ENCODE measurements at regions of chrX and their contacts with region 1.

Region 1: DNA sequence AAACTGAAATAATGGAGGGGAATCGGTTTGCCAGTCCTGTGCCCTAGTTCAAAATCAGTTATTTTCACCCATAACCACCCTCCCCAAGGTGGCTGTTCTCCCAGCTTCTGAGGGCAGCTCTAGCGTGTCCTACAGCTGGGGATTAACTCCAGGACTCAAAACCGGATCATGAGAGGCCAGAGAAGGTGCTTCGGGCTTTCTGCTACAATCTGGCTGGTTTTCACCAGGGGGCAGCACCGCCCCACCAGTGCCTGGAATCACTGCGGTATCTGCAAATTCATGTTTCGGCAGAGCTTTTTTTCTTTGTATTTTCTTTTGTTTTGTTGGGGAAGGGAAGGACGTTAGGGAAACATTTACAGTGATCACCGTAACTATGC is 28.4 kb downstream of the PDHA1 start:
- DNase-seq: no peak

Region 2: DNA sequence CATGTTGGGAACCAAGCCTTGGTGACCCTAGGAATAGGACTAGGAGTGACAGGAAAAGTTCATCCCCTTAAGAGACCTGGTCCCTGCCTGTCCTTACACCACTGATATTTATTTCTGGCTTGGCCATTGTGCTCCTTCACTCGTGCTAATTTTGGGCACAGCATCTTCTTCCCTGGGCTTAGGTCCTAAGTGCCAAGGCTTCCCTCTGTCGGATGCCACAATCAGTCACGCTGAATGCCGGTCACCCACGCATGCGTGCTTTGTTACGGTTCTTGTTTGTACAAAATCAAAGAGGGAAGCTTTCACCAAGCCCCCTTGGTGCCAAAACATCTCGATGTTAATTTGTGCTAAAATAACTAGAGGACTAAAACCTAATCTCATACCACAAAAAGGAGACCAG is 160.6 kb after region 1 on chrX:
- intact Hi-C with region 1: loop called (anchors 5 kb)
- DNase-seq: no peak

Measured in cardiac septum (tissue), 1 donor.